GM12878 (cell line): ENCODE measurements at regions of chr1 and their contacts with region 1.

Region 1: GRCh38 chr1:39189592-39190041 is 14.9 kb upstream of the MACF1 start:
- DNase-seq: no peak
- ATAC-seq: no peak
- H3K4me3 ChIP-seq: no peak overlapping the region
- H3K27ac ChIP-seq: no peak overlapping the region
- H3K4me1 ChIP-seq: peaks cover 35% of the 10 kb centered on the region
- H3K27me3 ChIP-seq: no peaks in the 10 kb centered on the region
- CTCF ChIP-seq: no peak
- EP300 ChIP-seq: no peak
- POLR2A ChIP-seq: no peak
- RAD21 ChIP-seq: no peak

Region 2: DNA sequence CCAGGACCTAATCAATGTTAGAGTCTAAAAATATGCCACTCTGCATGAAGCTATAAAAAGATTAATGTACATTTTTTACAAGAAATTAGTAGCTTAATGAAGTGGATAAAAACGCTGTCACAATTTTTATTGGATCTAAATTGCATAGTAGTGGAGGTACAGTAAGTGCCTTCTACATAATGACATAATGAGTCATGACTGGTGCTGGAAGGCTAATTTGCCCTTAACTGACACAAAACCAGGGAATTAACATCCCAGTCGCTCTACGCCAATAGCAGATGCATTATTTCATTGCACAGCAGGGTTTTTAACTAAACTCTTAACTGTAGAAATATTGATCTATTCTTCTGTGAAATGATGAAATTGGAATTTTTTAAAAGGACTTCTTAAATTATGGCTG is 363.4 kb before region 1 on chr1:
- CTCF ChIA-PET with region 1: no interaction called
- POLR2A ChIA-PET with region 1: no interaction called
- RAD21 ChIA-PET with region 1: no interaction called
- SMC1A ChIA-PET with region 1: no interaction called
- in situ Hi-C with region 1: no loop called
- intact Hi-C with region 1: no loop called
- DNase-seq: no peak
- ATAC-seq: no peak
- H3K4me3 ChIP-seq: no peak overlapping the region
- H3K27ac ChIP-seq: no peak overlapping the region
- H3K4me1 ChIP-seq: no peaks in the 10 kb centered on the region
- H3K27me3 ChIP-seq: peaks cover 0 to 4% of the 10 kb centered on the region in 2 experiments; a peak in 1 of 4 replicates
- CTCF ChIP-seq: no peak
- EP300 ChIP-seq: no peak
- POLR2A ChIP-seq: no peak
- RAD21 ChIP-seq: no peak

Region 3: GRCh38 chr1:38964140-38964548 is 225.5 kb before region 1 on chr1:
- CTCF ChIA-PET with region 1: no interaction called
- POLR2A ChIA-PET with region 1: no interaction called
- RAD21 ChIA-PET with region 1: no interaction called
- SMC1A ChIA-PET with region 1: no interaction called
- in situ Hi-C with region 1: no loop called
- intact Hi-C with region 1: no loop called
- DNase-seq: no peak
- ATAC-seq: peak; percentile 82
- H3K4me3 ChIP-seq: no peak overlapping the region
- H3K27ac ChIP-seq: no peak overlapping the region
- H3K4me1 ChIP-seq: no peaks in the 10 kb centered on the region
- H3K27me3 ChIP-seq: no peaks in the 10 kb centered on the region
- CTCF ChIP-seq: peak; percentile 37 to 44 (median 43); a peak in 4 of 6 replicates
- EP300 ChIP-seq: no peak
- POLR2A ChIP-seq: no peak
- RAD21 ChIP-seq: peak; percentile 33

Region 4: DNA sequence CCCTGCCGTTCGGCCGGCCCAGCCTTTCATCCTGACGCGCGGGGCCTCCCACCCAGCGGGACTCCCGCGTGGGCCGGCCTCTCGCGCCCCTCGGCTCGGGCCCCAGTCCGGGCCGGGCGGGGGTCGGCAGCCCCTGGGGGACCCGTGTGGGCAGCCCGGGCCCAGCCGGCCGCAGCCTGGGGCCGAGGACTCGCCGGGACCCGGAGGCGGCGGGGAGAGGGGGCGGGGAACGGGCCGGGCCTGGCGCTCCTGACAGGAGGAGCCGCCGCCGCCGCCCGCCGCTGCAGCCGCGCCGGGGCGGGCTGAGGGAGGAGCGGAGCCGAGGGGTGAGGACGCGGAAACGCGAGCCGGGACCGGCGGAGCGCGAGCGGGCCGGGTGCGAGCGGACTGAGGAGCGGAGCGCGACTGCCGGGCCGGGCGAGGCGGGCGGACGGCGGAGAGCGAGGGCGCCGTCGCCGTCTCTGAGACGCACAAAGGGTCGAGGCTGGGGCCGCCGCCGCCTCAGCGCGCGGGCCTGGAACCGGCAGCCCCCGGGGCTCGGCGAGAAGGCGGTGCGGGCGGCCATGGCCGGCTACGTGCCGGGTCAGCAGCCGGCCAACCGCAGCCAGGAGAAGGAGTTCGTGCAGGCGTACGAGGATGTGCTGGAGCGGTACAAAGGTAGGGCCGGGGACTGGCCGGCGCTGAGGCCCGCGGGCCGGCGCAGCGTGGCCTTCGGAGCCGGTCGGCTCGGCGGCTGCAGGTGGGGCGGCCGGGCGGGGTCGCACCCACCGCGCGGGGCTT is 84.4 kb before region 1 on chr1:
- CTCF ChIA-PET with region 1: interaction called, 465 read pairs
- POLR2A ChIA-PET with region 1: interaction called, 16 read pairs
- RAD21 ChIA-PET with region 1: interaction called, 304 read pairs
- SMC1A ChIA-PET with region 1: interaction called, 164 read pairs
- in situ Hi-C with region 1: no loop called
- intact Hi-C with region 1: loop called (anchors 1 kb)
- DNase-seq: no peak
- ATAC-seq: peak; percentile 51
- H3K4me3 ChIP-seq: peak overlapping the region; percentile 94
- H3K27ac ChIP-seq: peak overlapping the region; percentile 67
- H3K4me1 ChIP-seq: peaks cover 40% of the 10 kb centered on the region
- H3K27me3 ChIP-seq: no peaks in the 10 kb centered on the region
- CTCF ChIP-seq: no peak
- EP300 ChIP-seq: no peak
- POLR2A ChIP-seq: peak; percentile 75
- RAD21 ChIP-seq: no peak

Region 5: DNA sequence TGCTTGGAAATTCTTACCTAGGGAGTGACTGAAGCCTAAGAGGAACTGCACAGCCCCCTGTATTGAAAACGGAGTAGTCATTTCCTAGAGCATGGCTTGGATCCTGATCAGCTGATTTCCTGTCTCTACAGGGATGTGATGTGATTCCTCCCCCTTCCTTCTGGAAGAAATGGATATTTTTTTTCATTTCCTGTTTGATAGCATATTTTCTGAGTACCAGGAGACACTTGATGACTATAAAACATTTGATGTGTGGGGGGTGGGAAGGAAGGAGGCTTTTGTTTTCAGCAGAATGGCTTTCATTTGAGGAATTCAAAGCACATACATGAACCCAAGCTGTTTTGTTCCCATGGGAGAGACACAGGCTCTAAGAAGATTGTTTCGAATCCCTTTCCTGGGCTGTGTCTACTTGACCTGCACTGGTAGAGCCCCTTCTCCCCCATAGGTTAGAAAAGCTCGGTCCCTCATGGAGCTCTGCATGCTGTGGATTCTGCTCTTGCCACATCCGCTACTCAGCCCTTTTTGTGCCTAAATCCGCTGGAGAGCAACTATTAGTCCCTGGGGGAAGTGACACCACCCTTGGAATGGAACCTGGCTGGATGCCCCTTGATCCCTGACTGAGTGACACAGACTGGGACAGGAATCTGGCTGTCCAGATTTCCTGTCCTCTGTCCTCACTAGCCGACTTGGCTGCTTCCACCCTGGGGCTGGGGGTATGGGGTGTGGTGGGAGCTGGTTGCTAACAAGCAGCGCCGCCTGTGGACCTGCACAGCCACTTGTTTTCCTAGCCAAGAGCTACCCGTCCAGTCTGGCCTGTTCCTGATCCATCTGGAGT is 56.9 kb before region 1 on chr1:
- CTCF ChIA-PET with region 1: interaction called, 48 read pairs
- POLR2A ChIA-PET with region 1: no interaction called
- RAD21 ChIA-PET with region 1: interaction called, 21 read pairs
- SMC1A ChIA-PET with region 1: interaction called, 35 read pairs
- in situ Hi-C with region 1: no loop called
- intact Hi-C with region 1: no loop called
- DNase-seq: no peak
- ATAC-seq: no peak
- H3K4me3 ChIP-seq: no peak overlapping the region
- H3K27ac ChIP-seq: no peak overlapping the region
- H3K4me1 ChIP-seq: no peaks in the 10 kb centered on the region
- H3K27me3 ChIP-seq: no peaks in the 10 kb centered on the region
- CTCF ChIP-seq: no peak
- EP300 ChIP-seq: no peak
- POLR2A ChIP-seq: no peak
- RAD21 ChIP-seq: no peak

Region 6: GRCh38 chr1:39220891-39221870 is 31.6 kb after region 1 on chr1:
- CTCF ChIA-PET with region 1: interaction called, 190 read pairs
- POLR2A ChIA-PET with region 1: interaction called, 52 read pairs
- RAD21 ChIA-PET with region 1: interaction called, 206 read pairs
- SMC1A ChIA-PET with region 1: interaction called, 253 read pairs
- in situ Hi-C with region 1: no loop called
- intact Hi-C with region 1: no loop called
- DNase-seq: no peak
- ATAC-seq: no peak
- H3K4me3 ChIP-seq: no peak overlapping the region
- H3K27ac ChIP-seq: no peak overlapping the region; the same call in 1 of the 2 replicates
- H3K4me1 ChIP-seq: peaks cover 2% of the 10 kb centered on the region; the same call in 1 of the 2 replicates
- H3K27me3 ChIP-seq: no peaks in the 10 kb centered on the region
- CTCF ChIP-seq: no peak
- EP300 ChIP-seq: no peak
- POLR2A ChIP-seq: no peak
- RAD21 ChIP-seq: no peak